WTC11 (cell line): ENCODE measurements at regions of chr19 and their contacts with region 1.

Region 1: DNA sequence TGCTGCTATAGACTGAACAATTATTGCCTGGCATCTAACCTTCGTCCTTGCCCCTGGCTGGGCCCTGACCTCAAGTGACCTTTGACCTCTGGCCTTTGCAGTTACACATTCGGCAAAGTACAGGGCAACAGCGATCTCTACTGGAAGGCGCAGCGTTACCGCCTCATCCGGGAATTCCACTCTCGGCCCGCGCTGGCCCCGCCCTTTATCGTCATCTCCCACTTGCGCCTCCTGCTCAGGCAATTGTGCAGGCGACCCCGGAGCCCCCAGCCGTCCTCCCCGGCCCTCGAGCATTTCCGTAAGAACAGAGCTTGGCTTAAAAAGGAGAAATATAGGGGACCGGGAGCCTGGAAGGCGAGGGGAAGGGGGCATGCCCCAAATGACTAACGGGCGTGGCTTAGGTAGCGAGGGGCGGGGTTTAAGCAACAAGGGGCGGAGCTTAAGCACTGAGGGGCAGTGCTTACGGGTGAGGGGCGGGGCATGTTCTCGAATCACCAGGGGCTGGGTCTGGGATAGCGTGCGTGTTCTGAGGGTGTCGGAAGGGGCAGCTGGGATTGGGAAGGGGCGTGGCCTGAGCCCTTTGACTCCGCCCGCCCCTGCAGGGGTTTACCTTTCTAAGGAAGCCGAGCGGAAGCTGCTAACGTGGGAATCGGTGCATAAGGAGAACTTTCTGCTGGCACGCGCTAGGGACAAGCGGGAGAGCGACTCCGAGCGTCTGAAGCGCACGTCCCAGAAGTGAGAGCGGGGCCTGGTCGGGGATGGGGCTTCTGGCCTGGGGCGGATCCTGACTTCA is 52.7 kb downstream of the TRPM4 start:
- DNase-seq: peak; percentile 96
- ATAC-seq: peak; percentile 97
- H3K4me3 Mint-ChIP-seq: peak overlapping the region; percentile 75
- H3K27ac Mint-ChIP-seq: peak overlapping the region; percentile 92
- H3K4me1 Mint-ChIP-seq: peaks cover 7% of the 10 kb centered on the region
- H3K27me3 Mint-ChIP-seq: peaks cover 2% of the 10 kb centered on the region; the same call in 1 of the 2 replicates
- CTCF ChIP-seq: no peak

Region 2: GRCh38 chr19:49073514-49074378 is 136.6 kb before region 1 on chr19:
- CTCF ChIA-PET with region 1: interaction called, 15 read pairs
- POLR2A ChIA-PET with region 1: no interaction called
- DNase-seq: peak; percentile 68
- ATAC-seq: peak; percentile 23; the same call in 1 of the 2 replicates
- H3K4me3 Mint-ChIP-seq: peak overlapping the region; percentile 68
- H3K27ac Mint-ChIP-seq: no peak overlapping the region
- H3K4me1 Mint-ChIP-seq: peaks cover 8% of the 10 kb centered on the region; the same call in 1 of the 2 replicates
- H3K27me3 Mint-ChIP-seq: peaks cover 78% of the 10 kb centered on the region
- CTCF ChIP-seq: no peak; the same call in 1 of the 2 replicates

Region 3: GRCh38 chr19:49118565-49119410 is 91.5 kb before region 1 on chr19 and contains the start of gene C19orf73:
- CTCF ChIA-PET with region 1: interaction called, 23 read pairs
- POLR2A ChIA-PET with region 1: no interaction called
- DNase-seq: peak; percentile 94
- ATAC-seq: peak; percentile 81
- H3K4me3 Mint-ChIP-seq: peak within 1 kb of the TSS; percentile 75
- H3K27ac Mint-ChIP-seq: peak within 1 kb of the TSS; percentile 61
- H3K4me1 Mint-ChIP-seq: peaks cover 14% of the 10 kb centered on the region
- H3K27me3 Mint-ChIP-seq: peaks cover 64% of the 10 kb centered on the region
- CTCF ChIP-seq: no peak
- total RNA-seq, gene C19orf73: 3.1 to 3.4 TPM (median 3.2 TPM) in 3 replicates

Region 4: DNA sequence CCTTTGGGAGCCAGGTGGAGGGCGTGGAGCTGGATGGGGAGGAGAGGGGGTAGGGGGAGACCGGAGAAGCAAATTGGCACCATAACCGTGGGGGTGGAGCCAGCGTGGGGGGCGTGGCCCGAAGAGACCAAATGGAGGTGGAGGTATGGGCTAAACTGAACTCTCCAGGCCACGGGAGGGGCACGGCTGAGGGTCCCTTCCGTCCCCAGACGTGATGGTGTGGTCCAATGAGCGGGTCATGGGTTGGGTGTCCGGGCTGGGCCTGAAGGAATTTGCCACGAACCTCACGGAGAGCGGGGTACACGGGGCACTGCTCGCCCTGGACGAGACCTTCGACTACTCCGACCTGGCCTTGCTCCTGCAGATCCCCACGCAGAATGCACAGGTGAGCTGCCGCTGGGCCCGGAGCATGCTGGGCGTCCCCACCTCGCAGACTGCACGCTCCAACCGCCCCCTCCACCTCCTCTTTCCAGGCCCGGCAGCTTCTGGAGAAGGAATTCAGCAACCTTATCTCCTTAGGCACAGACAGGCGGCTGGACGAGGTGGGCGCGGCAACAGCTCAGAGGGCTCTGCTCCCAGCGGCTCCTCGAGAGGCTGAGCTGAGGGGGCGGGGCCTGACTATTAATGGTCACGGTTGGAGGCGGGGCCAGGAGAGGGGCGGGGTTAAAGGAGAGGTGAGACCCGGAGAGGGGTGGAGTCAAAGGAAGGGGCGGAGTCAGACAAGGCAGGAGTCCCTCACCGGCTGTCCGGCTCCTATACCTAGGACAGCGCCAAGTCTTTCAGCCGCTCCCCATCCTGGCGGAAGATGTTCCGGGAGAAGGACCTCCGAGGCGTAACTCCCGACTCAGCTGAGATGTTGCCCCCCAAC is 61.3 kb before region 1 on chr19:
- CTCF ChIA-PET with region 1: interaction called, 24 read pairs
- POLR2A ChIA-PET with region 1: interaction called, 4 read pairs
- DNase-seq: peak; percentile 100
- ATAC-seq: peak; percentile 57
- H3K4me3 Mint-ChIP-seq: peak overlapping the region; percentile 92
- H3K27ac Mint-ChIP-seq: peak overlapping the region; percentile 91
- H3K4me1 Mint-ChIP-seq: peaks cover 33% of the 10 kb centered on the region
- H3K27me3 Mint-ChIP-seq: peaks cover 42% of the 10 kb centered on the region
- CTCF ChIP-seq: no peak

Region 5: DNA sequence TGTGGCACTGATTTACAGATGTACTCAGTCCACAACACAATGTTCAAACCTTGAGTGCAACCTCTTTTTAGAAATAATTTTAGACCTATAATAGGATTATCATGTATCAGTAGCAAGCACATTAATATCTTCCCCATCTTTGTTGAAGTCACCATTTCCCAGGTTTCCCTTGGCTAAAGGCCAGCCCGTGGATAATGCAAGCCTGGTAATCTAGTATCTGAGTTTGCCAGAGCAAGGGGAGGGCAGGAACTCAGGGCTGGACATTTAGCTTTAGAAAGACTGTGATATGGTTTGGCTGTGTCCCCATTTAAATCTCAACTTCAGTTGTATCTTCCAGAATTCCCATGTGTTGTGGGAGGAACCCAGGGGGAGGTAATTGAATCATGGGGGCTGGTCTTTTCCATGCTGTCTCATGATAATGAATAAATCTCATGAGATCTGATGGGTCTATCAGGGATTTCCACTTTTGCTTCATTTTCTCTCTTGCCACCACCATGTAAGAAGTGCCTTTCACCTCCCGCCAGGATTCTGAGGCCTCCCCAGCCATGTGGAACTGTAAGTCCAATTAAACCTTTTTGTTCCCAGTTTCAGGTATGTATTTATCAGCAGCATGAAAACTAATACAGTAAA is 77.0 kb after region 1 on chr19:
- CTCF ChIA-PET with region 1: no interaction called
- POLR2A ChIA-PET with region 1: no interaction called
- DNase-seq: no peak
- ATAC-seq: no peak
- H3K4me3 Mint-ChIP-seq: no peak overlapping the region
- H3K27ac Mint-ChIP-seq: no peak overlapping the region
- H3K4me1 Mint-ChIP-seq: no peaks in the 10 kb centered on the region
- H3K27me3 Mint-ChIP-seq: peaks cover 19% of the 10 kb centered on the region
- CTCF ChIP-seq: no peak